PC-3 (cell line): ENCODE measurements at regions of chr3 and their contacts with region 1.

Region 1: GRCh38 chr3:55373423-55373822 is 113.7 kb downstream of the WNT5A start:
- DNase-seq: no peak
- ATAC-seq: no peak
- H3K4me3 ChIP-seq: no peak overlapping the region
- H3K27ac ChIP-seq: no peak overlapping the region
- H3K4me1 ChIP-seq: no peaks in the 10 kb centered on the region
- H3K27me3 ChIP-seq: no peaks in the 10 kb centered on the region
- CTCF ChIP-seq: no peak

Region 2: DNA sequence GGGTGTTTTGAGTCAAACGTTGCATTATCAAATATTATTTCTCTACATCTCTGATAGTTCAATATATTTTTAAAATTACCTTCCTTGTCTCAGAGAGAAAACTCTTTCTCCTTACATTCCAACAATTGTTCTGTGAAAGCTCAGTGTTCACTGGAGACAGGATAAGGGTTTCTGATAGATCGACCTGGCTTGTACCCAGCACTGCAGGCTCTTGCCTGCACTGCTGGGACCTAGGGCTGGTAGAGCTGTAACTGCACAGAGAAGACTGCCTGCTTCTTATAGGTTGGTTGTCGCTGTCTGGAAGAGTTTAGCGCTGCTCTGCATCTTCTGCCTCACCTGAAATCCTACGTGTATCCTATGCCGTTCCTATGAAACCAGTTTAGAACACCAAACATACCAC is 195.7 kb before region 1 on chr3:
- CTCF ChIA-PET with region 1: no interaction called
- POLR2A ChIA-PET with region 1: no interaction called
- intact Hi-C with region 1: no loop called
- DNase-seq: no peak
- ATAC-seq: no peak
- H3K4me3 ChIP-seq: no peak overlapping the region
- H3K27ac ChIP-seq: no peak overlapping the region
- H3K4me1 ChIP-seq: no peaks in the 10 kb centered on the region
- H3K27me3 ChIP-seq: peaks cover 8% of the 10 kb centered on the region
- CTCF ChIP-seq: no peak

Region 3: DNA sequence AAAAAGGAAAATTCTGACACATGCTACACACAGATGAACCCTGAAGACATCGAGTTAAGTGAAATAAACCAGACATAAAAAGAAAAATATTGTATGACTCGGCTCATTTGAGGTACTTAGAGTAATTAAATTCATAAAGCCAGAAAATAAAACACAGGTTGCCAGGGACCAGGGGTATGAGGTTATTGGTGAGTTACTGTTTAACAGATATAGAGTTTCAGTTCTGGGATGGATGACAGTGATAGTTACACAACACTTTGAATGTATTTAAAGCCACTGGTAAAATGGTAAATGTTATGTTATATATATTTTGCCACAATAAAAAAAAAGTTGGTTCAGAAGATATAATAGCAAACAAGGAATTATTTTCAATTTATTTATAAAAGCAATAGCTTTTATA is 549.8 kb after region 1 on chr3:
- CTCF ChIA-PET with region 1: no interaction called
- POLR2A ChIA-PET with region 1: no interaction called
- intact Hi-C with region 1: no loop called
- DNase-seq: no peak
- ATAC-seq: no peak
- H3K4me3 ChIP-seq: no peak overlapping the region
- H3K27ac ChIP-seq: no peak overlapping the region
- H3K4me1 ChIP-seq: no peaks in the 10 kb centered on the region
- H3K27me3 ChIP-seq: peaks cover 27% of the 10 kb centered on the region; the same call in 1 of the 2 replicates
- CTCF ChIP-seq: no peak

Region 4: GRCh38 chr3:56111606-56112304 is 738.3 kb after region 1 on chr3:
- CTCF ChIA-PET with region 1: no interaction called
- POLR2A ChIA-PET with region 1: no interaction called
- intact Hi-C with region 1: loop called (anchors 5 kb)
- DNase-seq: no peak
- ATAC-seq: no peak
- H3K4me3 ChIP-seq: no peak overlapping the region
- H3K27ac ChIP-seq: no peak overlapping the region
- H3K4me1 ChIP-seq: no peaks in the 10 kb centered on the region
- H3K27me3 ChIP-seq: peaks cover 17% of the 10 kb centered on the region
- CTCF ChIP-seq: no peak